Activated CD4-positive, alpha-beta T cell treated with anti-CD3 and anti-CD28 coated beads, Interleukin-2, amount 10 ng/mL, durations not matched to agents 24 days and 14 days (primary cell): ENCODE measurements at regions of chr1 and their contacts with region 1.

Region 1: DNA sequence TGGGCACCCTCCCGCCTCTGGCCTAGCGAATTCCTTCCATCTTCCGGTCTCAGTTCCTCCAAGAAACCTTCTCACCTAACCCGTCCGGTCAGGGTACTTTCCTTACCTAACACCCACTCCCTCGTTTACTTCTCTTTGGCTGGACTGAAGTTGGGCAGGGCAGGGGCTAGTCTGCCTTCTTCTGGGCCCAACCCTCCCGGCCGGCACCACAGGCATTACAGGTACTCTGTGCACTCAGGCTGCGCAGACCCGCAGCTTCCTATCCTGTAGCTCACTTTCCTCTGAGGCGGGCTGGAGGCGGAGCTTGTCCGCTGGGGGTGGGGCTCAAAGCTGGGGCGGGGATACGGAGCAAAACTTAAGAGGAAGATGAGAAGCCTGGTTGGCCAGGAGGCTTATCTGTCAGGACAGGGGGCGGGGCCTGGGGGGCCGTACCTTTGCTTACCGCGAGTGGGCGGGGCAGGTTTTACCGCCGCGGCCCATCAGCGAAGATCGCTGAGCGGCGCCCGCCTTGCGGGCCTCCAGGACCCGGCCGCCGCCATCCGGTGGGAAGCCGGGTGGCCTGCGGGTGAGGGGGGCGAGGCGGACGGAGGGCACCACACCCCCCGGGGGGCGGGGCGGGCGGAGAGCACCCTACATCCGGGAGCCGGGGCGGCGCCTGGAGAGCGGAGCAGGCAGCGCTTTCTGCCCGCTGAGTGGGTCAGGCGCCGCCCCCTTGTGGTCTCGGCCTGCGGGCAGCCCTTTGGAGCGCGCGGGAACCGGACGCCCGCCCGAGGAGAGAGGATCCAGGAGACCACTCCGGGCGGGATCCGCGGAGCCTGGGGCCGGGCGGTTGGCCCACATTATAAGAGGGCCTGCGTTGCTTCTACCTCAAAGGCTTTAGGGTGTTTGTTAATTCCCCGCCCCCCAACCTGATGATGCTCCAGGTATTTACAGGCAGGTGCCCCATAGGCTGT is 31.9 kb downstream of the ZNF648 start:
- DNase-seq: peak; percentile 99
- H3K4me3 Mint-ChIP-seq: peak overlapping the region; percentile 99
- H3K27ac Mint-ChIP-seq: peak overlapping the region; percentile 99
- H3K4me1 Mint-ChIP-seq: peaks cover 14% of the 10 kb centered on the region
- H3K27me3 Mint-ChIP-seq: no peaks in the 10 kb centered on the region

Region 2: DNA sequence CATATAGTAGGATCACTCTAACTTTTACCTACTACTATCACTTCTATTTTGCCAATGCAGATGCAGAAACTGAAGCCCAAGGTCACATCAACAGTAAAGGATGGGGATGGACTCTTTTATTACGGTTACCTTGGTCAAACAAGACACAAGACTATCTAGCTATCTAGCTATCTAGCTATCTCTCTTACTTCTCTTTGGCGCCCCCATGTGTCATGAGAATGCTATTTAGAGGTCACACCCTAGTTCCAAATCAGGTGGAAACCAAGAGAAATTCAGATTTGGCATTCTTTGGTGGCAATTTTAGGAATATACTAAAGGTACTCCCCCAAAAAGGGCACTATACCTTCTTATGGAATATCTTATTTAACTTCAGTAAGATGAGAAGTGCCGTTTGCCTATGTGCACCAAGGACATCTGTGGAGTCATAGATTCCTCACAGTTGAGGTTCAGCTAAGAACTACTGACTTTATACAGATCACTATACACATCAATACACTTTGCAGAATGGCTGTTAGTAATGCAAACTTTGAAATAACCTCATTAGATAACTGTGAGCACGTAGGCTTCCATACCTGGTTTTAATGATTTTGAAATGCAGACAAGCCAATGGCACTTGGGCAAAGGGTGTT is 25.2 kb after region 1 on chr1:
- intact Hi-C with region 1: loop called (anchors 1 kb)
- DNase-seq: peak; percentile 90
- H3K4me3 Mint-ChIP-seq: no peak overlapping the region
- H3K27ac Mint-ChIP-seq: no peak overlapping the region
- H3K4me1 Mint-ChIP-seq: peaks cover 23% of the 10 kb centered on the region
- H3K27me3 Mint-ChIP-seq: peaks cover 30% of the 10 kb centered on the region

Region 3: GRCh38 chr1:182259229-182259872 is 229.7 kb after region 1 on chr1:
- intact Hi-C with region 1: loop called (anchors 5 kb)
- DNase-seq: peak; percentile 82
- H3K4me3 Mint-ChIP-seq: peak overlapping the region; percentile 7
- H3K27ac Mint-ChIP-seq: peak overlapping the region; percentile 89
- H3K4me1 Mint-ChIP-seq: peaks cover 14% of the 10 kb centered on the region
- H3K27me3 Mint-ChIP-seq: no peaks in the 10 kb centered on the region